Posterior cingulate gyrus (tissue), 11 donors: ENCODE measurements at regions of chr9 and their contacts with region 1.

Region 1: DNA sequence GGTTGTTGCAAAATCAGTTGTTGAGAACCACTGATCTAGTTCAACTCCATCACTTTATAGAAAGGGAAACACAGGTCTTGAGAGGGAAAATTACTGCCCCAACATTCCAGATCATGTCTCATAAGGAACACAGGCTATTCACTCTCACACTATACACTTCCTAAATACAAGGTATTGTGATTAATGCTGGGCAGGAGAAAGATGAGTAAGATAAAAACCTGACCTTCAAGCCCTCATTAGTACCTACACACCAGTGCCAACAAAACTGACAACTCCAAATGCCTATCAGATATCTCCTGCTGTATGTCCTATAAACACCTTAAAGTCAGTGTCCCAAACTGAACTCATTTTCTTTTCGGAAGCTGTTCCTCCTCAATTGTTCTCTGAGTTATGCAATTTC is 8.2 kb downstream of the GNE start:
- DNase-seq: no peak

Region 2: GRCh38 chr9:36214571-36214970 is 35.5 kb before region 1 on chr9:
- intact Hi-C with region 1: loop called (anchors 5 kb)
- DNase-seq: no peak

Region 3: GRCh38 chr9:36328798-36329411 is 78.8 kb after region 1 on chr9:
- intact Hi-C with region 1: loop called (anchors 1 kb)
- DNase-seq: peak in 1 of 10 donors; percentile 53